ENCODE measurements at regions of chr10 and their contacts with region 1.

Region 1: DNA sequence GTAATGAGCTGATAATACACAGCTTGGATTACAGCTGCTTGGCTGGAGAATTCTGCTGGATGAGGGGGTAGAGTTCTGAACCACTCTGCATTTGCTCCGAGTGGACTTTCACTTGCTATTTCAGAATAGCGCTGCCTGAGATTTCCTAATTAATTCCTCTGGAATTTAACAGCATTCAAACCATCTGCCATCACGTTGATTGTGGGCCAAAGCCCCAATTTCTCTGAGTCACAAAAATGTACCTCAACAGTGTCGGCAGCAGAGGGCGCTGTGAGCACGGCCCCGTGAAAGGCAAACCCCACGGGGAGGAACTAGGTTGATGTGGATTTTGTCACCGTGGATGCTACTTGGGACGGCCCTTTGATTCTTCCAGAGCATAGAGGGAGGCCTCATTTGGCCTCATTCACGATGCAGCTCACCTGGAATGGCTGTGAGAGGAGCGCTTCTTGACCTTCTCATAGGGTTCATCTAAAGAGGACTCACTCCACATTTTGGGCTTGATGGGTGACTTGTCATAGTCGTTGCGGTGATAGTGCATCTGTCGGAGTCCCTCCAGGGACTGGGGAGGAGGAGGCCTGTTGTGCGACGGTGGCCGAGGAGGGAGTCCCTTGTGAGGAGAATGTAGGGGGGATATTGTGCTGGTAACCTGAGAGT is 73.3 kb downstream of the PRPF18 start:
- DNase-seq: peak; percentile 59
- H3K4me3 Mint-ChIP-seq: peak overlapping the region; percentile 10
- H3K27ac Mint-ChIP-seq: no peak overlapping the region
- H3K4me1 Mint-ChIP-seq: peaks cover 17% of the 10 kb centered on the region
- H3K27me3 Mint-ChIP-seq: no peaks in the 10 kb centered on the region
- CTCF ChIP-seq: peak; percentile 81

Region 2: GRCh38 chr10:13536674-13537366 is 123.2 kb before region 1 on chr10:
- CTCF ChIA-PET with region 1: no interaction called
- POLR2A ChIA-PET with region 1: no interaction called
- intact Hi-C with region 1: no loop called
- DNase-seq: peak; percentile 50
- H3K4me3 Mint-ChIP-seq: no peak overlapping the region
- H3K27ac Mint-ChIP-seq: no peak overlapping the region
- H3K4me1 Mint-ChIP-seq: no peaks in the 10 kb centered on the region
- H3K27me3 Mint-ChIP-seq: peaks cover 44% of the 10 kb centered on the region
- CTCF ChIP-seq: peak; percentile 37

Region 3: GRCh38 chr10:13613519-13613918 is 46.5 kb before region 1 on chr10:
- CTCF ChIA-PET with region 1: interaction called, 4 read pairs
- POLR2A ChIA-PET with region 1: no interaction called
- intact Hi-C with region 1: loop called (anchors 1 kb)
- DNase-seq: peak; percentile 8
- H3K4me3 Mint-ChIP-seq: no peak overlapping the region
- H3K27ac Mint-ChIP-seq: no peak overlapping the region
- H3K4me1 Mint-ChIP-seq: peaks cover 22% of the 10 kb centered on the region
- H3K27me3 Mint-ChIP-seq: no peaks in the 10 kb centered on the region
- CTCF ChIP-seq: peak; percentile 17

Region 4: DNA sequence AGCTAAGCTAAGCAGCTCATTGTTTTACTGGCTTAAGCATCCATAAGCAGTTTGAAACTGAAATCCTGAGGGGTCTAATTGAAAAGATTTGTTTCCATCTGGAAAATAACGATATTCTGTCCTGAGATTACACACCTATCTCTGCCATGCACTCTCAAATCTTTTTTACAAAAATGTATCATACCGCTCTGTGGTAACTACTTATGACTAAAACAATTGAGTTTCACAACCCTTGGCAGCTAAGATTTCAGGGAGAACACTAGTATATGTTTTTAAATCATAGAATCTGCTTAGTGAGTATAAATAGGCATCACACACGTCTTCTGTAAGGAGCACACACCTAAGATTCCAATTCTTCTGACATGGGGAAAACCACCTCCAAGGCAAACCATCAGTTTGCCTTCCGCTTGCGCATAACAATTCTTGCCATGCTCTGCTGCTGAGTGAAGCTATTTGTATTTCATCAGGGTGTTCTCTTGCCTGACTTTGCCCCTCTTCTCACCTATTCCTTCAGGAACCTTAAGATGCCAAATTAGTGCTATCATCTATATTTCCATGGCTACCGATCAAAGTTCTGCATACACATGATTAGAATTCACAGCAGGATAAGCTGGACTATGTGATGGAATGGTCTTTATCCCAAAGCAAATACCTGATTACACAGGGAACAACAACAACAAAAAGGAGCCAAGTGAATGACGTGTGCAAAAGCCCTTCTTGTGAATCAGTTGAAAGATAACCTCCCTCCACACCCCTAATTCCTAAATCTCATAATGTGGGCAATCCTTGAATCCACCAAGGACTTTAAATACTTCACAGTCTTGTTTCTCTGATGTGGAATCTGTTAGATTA is 32.3 kb before region 1 on chr10:
- CTCF ChIA-PET with region 1: no interaction called
- POLR2A ChIA-PET with region 1: no interaction called
- intact Hi-C with region 1: no loop called
- DNase-seq: peak; percentile 3
- H3K4me3 Mint-ChIP-seq: no peak overlapping the region
- H3K27ac Mint-ChIP-seq: no peak overlapping the region
- H3K4me1 Mint-ChIP-seq: no peaks in the 10 kb centered on the region
- H3K27me3 Mint-ChIP-seq: no peaks in the 10 kb centered on the region
- CTCF ChIP-seq: no peak

Region 5: DNA sequence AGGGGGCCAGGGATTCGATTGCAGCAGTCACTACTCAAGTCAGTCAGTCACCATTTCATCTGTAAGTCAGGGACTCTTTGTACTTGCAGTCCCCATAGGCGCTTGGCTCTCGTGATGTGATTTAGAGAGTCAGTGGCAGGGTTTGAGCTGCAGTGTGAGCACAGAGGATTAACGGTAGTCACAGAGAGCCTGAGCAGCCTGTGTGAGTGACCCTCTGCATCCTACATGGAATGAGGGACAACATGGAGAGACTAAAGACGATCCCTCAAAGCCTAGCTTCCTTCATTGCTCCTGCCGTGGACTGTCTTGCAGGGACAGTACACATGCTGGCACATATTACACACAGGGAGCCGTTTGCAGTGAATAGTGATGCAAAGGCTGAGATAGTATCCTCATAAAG is 17.0 kb before region 1 on chr10:
- CTCF ChIA-PET with region 1: interaction called, 20 read pairs
- POLR2A ChIA-PET with region 1: interaction called, 3 read pairs
- intact Hi-C with region 1: no loop called
- DNase-seq: no peak
- H3K4me3 Mint-ChIP-seq: no peak overlapping the region
- H3K27ac Mint-ChIP-seq: no peak overlapping the region
- H3K4me1 Mint-ChIP-seq: peaks cover 4% of the 10 kb centered on the region
- H3K27me3 Mint-ChIP-seq: no peaks in the 10 kb centered on the region
- CTCF ChIP-seq: no peak

Region 6: GRCh38 chr10:13758312-13758711 is 98.3 kb after region 1 on chr10:
- CTCF ChIA-PET with region 1: interaction called, 10 read pairs
- POLR2A ChIA-PET with region 1: interaction called, 4 read pairs
- intact Hi-C with region 1: no loop called
- DNase-seq: peak; percentile 44
- H3K4me3 Mint-ChIP-seq: no peak overlapping the region
- H3K27ac Mint-ChIP-seq: peak overlapping the region; percentile 83
- H3K4me1 Mint-ChIP-seq: peaks cover 6% of the 10 kb centered on the region
- H3K27me3 Mint-ChIP-seq: no peaks in the 10 kb centered on the region
- CTCF ChIP-seq: no peak

Region 7: GRCh38 chr10:13776861-13777311 is 116.9 kb after region 1 on chr10:
- CTCF ChIA-PET with region 1: interaction called, 46 read pairs
- POLR2A ChIA-PET with region 1: interaction called, 9 read pairs
- intact Hi-C with region 1: loop called (anchors 1 kb)
- DNase-seq: peak; percentile 17
- H3K4me3 Mint-ChIP-seq: no peak overlapping the region
- H3K27ac Mint-ChIP-seq: no peak overlapping the region
- H3K4me1 Mint-ChIP-seq: peaks cover 18% of the 10 kb centered on the region
- H3K27me3 Mint-ChIP-seq: no peaks in the 10 kb centered on the region
- CTCF ChIP-seq: no peak

Region 8: DNA sequence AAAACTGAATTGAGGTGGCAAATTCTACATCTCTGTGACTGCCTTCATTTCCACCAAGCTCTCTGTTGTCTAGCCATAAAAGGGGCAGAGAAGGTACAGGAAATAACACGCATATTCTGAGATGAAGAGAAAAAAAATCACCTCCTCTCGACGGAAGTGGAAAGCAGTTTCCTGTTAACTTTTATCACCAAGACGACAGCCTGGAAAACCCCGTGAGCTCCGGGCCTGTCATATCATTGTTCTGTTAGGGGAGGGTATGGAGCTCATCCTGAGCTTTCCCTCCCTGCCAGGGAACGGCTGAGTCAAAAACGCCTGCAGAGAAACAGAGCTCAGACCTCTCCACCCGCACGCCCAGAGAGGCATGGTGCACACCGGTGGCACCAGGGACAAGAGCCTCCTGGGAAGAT is 127.0 kb after region 1 on chr10:
- CTCF ChIA-PET with region 1: interaction called, 11 read pairs
- POLR2A ChIA-PET with region 1: no interaction called
- intact Hi-C with region 1: no loop called
- DNase-seq: no peak
- H3K4me3 Mint-ChIP-seq: no peak overlapping the region
- H3K27ac Mint-ChIP-seq: no peak overlapping the region
- H3K4me1 Mint-ChIP-seq: no peaks in the 10 kb centered on the region
- H3K27me3 Mint-ChIP-seq: no peaks in the 10 kb centered on the region
- CTCF ChIP-seq: no peak

Region 9: DNA sequence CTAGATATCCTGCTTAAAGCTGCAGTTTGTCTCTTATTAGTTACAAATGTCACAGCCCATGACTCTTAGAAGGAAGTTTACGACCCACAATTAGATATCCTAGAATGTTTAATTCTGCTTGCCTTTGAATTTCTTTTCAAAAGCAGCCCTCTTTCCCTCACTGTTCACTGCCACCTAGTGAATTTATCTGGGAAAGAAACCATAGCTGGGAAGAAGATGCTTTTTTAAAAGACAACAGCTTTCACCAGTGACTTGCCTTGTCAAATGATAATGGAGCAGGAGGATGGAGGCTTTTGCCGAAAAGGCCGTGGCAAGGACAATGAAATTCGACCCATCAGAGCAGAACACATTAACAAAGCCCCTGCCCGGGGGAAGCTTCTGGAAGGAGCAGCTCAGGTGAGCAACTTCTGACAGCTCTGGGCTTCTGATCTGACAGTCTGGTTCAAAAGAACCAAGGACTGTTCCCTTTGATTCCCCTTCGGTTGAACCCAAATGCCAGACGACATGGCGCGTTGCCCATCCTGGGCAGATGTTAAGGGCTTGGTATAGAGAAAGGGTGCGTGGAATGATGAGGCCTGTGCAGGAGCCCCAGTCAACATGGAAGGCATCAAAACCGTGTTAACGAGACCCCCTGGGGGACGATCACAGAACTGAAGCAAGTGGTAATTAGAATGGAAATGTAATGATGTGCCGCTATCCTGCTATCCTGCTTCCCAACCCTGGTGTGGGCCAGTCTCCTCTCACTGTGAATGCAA is 433.9 kb after region 1 on chr10:
- CTCF ChIA-PET with region 1: no interaction called
- POLR2A ChIA-PET with region 1: no interaction called
- intact Hi-C with region 1: loop called (anchors 2 kb)
- DNase-seq: peak; percentile 29
- H3K4me3 Mint-ChIP-seq: no peak overlapping the region
- H3K27ac Mint-ChIP-seq: no peak overlapping the region
- H3K4me1 Mint-ChIP-seq: no peaks in the 10 kb centered on the region
- H3K27me3 Mint-ChIP-seq: no peaks in the 10 kb centered on the region
- CTCF ChIP-seq: peak; percentile 37

Measured in MCF 10A (cell line).